ENCODE measurements at regions of chr10 and their contacts with region 1.

Region 1: DNA sequence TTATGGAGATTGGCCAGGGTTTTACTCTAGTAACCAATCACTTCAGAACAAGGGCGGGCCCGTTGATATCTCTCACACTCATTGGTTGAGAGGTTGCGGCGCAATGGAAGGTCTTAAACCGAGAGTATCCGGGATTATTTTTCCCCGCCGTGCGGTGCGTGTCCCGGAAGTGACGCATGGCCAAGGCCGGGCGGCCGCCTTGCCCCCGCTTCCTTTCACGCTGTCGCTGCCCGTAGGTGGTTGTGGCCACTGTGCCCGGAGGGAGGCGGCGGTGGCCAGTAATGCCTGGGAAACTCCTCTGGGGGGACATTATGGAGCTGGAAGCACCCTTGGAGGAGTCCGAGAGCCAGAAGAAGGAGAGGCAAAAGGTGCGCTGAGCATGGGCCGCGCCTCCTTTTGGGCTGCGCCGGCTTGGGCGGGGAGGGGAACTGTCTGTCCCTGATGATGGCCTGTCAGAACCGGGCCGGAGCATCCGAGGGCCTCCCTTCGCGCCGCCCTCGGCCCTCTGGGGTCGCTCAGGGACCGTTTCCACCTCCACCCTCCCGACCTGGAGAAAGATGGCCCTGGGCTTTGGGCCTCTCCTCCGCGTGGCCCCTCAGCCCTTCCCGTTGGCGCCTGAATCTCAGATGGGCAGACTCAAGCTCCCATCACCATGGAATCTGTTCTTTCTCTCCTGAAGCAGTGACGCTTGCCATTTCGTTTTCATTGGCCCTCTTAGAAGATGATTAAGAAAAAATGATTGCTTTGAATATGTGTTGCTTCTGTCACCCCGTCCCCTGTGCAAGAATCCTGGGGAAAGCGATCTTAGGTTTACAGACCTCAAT is at the start of gene DDX50:
- DNase-seq: peak; percentile 98
- ATAC-seq: peak; percentile 97
- H3K4me3 Mint-ChIP-seq: peak within 1 kb of the TSS; percentile 98
- H3K27ac Mint-ChIP-seq: peak within 1 kb of the TSS; percentile 99
- H3K4me1 Mint-ChIP-seq: peaks cover 48% of the 10 kb centered on the region
- H3K27me3 Mint-ChIP-seq: peaks cover 4% of the 10 kb centered on the region
- total RNA-seq, gene DDX50: 61.6 to 81.6 TPM

Region 2: DNA sequence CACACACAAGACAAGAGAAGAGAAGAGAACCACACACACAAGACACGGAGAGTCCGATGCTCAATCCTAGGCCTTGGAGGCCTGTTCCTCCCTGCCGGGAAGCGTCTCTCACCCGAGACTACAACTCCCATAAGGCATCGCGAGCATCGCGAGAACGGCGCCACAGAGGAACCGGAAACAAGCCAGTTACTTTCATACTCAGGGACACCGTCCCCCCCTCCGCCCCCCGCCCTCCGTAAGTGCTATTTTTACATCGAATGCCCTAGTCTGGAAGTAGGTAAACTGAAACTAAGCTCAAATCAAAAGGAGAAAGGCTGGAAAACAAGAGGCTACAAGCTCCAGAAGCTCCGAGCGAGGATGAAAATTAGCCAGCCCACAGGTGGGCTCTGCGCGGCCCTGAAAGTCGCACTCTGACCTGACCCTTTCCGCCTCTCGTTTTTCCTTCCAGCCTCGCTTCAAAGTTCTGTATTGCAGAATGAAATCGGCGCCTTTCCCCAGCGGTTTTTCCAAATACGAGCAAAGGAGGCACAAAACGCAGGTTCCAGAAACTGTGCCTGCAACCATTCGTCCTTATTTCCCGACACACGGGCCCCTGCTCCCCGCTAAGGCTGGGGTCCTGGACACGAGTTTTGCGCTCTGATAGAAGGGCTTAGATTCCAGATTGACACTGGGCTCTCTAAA is 1051.8 kb before region 1 on chr10:
- CTCF ChIA-PET with region 1: no interaction called
- POLR2A ChIA-PET with region 1: no interaction called
- intact Hi-C with region 1: loop called in 1 of 2 experiments (anchors 10 kb)
- DNase-seq: peak; percentile 96
- ATAC-seq: peak; percentile 97
- H3K4me3 Mint-ChIP-seq: peak overlapping the region; percentile 86
- H3K27ac Mint-ChIP-seq: peak overlapping the region; percentile 95
- H3K4me1 Mint-ChIP-seq: peaks cover 12% of the 10 kb centered on the region
- H3K27me3 Mint-ChIP-seq: no peaks in the 10 kb centered on the region

Region 3: DNA sequence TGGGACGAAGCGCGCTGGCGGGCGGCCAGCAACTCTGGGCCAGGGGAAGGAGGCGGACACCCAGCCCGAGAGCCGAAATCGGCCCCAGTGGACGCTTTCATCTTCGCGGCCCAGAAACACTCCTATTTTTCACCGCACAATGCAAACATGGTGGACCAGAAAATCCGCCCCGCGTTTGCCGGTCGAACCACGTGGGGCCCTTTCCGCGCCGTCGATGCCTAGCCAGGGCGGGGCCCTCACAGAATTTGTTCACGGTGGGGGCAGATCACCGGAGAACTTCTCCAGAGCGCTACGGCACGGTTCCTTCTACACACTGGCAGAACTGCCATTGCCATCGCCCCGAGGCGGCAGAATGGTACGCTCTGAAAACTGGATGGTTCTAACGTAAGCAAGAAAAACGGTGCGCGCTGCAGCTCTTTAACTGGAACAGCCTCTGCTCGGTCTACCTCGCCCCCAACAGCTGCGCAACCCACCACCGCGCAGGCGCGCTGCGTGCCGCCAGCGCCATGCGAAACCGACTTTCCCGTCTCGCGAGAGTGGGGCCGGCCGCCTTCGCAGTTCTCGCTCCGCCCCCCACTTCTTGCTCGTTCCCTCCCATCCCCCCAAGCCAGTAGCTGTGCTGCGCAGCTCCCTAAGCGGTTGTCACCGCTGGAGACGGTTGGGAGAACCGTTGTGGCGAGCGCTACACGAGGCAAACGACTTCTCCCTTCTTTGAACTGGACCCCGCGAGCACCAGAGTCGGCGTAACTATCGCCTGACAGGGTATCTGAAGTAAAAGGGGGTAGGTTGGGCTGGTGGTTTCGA is 569.7 kb before region 1 on chr10 and contains the start of gene HNRNPH3:
- CTCF ChIA-PET with region 1: interaction called, 3 read pairs
- POLR2A ChIA-PET with region 1: interaction called, 3 read pairs
- intact Hi-C with region 1: loop called (anchors 1 to 5 kb)
- DNase-seq: peak; percentile 99
- ATAC-seq: peak; percentile 88
- H3K4me3 Mint-ChIP-seq: peak within 1 kb of the TSS; percentile 97
- H3K27ac Mint-ChIP-seq: peak within 1 kb of the TSS; percentile 100
- H3K4me1 Mint-ChIP-seq: peaks cover 41% of the 10 kb centered on the region
- H3K27me3 Mint-ChIP-seq: no peaks in the 10 kb centered on the region
- total RNA-seq, gene HNRNPH3: 126 to 157 TPM

Region 4: GRCh38 chr10:68526626-68527307 is 374.5 kb before region 1 on chr10:
- CTCF ChIA-PET with region 1: no interaction called
- POLR2A ChIA-PET with region 1: interaction called, 3 read pairs
- intact Hi-C with region 1: loop called (anchors 1 to 5 kb)
- DNase-seq: no peak
- ATAC-seq: peak; percentile 16
- H3K4me3 Mint-ChIP-seq: peak overlapping the region; percentile 93
- H3K27ac Mint-ChIP-seq: peak overlapping the region; percentile 88
- H3K4me1 Mint-ChIP-seq: peaks cover 9% of the 10 kb centered on the region
- H3K27me3 Mint-ChIP-seq: no peaks in the 10 kb centered on the region

Region 5: DNA sequence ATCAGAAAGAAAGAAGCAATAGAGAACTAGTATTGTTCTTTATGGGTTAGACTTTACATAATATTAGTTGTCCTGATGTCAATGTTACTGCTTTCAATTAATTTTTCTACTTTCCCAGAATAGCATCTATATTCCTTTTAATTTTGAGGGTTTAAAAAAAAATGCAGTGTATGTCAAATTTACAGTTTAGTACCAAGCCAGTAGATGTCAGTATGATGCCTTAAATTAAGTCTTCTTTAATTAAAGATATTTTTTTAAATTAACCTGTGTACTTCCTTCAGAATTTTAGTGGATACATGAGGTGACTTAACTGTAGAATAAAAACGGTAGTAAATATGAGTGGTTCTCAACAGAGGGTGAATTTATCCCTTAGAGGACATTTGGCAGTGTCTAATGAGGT is 109.2 kb before region 1 on chr10:
- CTCF ChIA-PET with region 1: no interaction called
- POLR2A ChIA-PET with region 1: no interaction called
- intact Hi-C with region 1: loop called (anchors 2 to 5 kb)
- DNase-seq: no peak
- ATAC-seq: no peak
- H3K4me3 Mint-ChIP-seq: no peak overlapping the region
- H3K27ac Mint-ChIP-seq: no peak overlapping the region
- H3K4me1 Mint-ChIP-seq: no peaks in the 10 kb centered on the region
- H3K27me3 Mint-ChIP-seq: no peaks in the 10 kb centered on the region

Region 6: DNA sequence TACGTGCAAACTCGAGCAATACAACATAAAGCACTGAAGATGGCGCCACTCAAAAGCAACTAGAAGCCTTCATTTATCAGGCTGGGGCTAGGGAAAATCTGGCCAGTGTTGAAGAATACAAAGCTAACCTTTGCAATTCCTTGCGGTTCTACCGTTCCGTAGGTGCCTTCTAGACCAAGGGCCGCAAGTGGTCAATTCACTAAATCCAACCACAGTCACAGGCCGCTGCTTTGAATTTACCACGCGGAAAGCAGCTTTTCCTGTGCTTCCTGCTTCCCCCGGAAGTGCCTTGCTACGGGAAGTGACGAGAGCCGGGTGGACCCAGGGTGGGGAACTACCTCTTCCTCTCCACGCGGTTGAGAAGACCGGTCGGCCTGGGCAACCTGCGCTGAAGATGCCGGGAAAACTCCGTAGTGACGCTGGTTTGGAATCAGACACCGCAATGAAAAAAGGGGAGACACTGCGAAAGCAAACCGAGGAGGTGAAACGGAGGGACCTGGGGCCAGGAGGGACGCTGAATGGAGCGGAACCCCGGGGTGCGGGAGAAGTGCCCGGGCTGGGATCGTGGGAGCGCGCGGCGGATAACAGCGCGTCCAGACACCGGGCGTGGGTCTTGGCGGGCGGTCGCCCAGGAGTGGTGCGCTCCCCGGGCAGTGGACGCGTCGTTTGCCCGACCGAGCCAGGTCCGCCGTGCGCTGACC is 54.7 kb after region 1 on chr10 and contains the start of gene DDX21:
- CTCF ChIA-PET with region 1: interaction called, 6 read pairs
- POLR2A ChIA-PET with region 1: interaction called, 21 read pairs
- intact Hi-C with region 1: loop called (anchors 1 kb)
- DNase-seq: peak; percentile 94
- ATAC-seq: peak; percentile 85
- H3K4me3 Mint-ChIP-seq: peak within 1 kb of the TSS; percentile 98
- H3K27ac Mint-ChIP-seq: peak within 1 kb of the TSS; percentile 100
- H3K4me1 Mint-ChIP-seq: peaks cover 35% of the 10 kb centered on the region
- H3K27me3 Mint-ChIP-seq: no peaks in the 10 kb centered on the region
- total RNA-seq, gene DDX21: 187 to 192 TPM

Region 7: GRCh38 chr10:69123747-69124562 is 222.6 kb after region 1 on chr10 and contains the start of gene VPS26A:
- CTCF ChIA-PET with region 1: no interaction called
- POLR2A ChIA-PET with region 1: no interaction called
- intact Hi-C with region 1: loop called in 1 of 2 experiments (anchors 1 kb)
- DNase-seq: peak; percentile 100
- ATAC-seq: peak; percentile 95
- H3K4me3 Mint-ChIP-seq: peak within 1 kb of the TSS; percentile 90
- H3K27ac Mint-ChIP-seq: peak within 1 kb of the TSS; percentile 91
- H3K4me1 Mint-ChIP-seq: peaks cover 31% of the 10 kb centered on the region
- H3K27me3 Mint-ChIP-seq: no peaks in the 10 kb centered on the region
- total RNA-seq, gene VPS26A: 27.1 to 32.2 TPM